PC-9 (cell line): ENCODE measurements at regions of chr7 and their contacts with region 1.

Region 1: DNA sequence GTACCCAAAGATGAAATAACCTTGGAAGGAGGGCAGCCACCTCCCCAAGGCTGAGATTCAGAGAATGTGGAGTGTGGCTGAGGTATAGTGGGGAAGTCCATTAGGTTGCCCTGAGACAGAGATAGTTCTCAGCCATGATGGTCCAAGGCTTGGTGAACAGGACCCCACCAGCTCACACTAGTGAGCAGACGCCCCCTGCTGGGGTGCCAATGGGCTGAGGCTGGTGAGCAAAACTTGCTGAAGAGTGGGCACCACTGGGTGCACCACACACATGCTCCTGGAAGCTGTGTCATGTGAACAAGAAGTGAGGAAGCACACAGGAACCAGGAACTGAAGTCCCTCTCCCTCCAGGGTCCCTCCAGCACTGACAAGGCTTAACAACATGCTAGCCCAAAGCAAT is 8.9 kb downstream of the FBXL13 start:
- DNase-seq: peak in 1 of 2 experiments; percentile 23
- H3K4me3 ChIP-seq: no peak overlapping the region
- H3K27ac ChIP-seq: no peak overlapping the region
- H3K4me1 ChIP-seq: no peaks in the 10 kb centered on the region
- H3K27me3 ChIP-seq: no peaks in the 10 kb centered on the region
- CTCF ChIP-seq: peak; percentile 53

Region 2: DNA sequence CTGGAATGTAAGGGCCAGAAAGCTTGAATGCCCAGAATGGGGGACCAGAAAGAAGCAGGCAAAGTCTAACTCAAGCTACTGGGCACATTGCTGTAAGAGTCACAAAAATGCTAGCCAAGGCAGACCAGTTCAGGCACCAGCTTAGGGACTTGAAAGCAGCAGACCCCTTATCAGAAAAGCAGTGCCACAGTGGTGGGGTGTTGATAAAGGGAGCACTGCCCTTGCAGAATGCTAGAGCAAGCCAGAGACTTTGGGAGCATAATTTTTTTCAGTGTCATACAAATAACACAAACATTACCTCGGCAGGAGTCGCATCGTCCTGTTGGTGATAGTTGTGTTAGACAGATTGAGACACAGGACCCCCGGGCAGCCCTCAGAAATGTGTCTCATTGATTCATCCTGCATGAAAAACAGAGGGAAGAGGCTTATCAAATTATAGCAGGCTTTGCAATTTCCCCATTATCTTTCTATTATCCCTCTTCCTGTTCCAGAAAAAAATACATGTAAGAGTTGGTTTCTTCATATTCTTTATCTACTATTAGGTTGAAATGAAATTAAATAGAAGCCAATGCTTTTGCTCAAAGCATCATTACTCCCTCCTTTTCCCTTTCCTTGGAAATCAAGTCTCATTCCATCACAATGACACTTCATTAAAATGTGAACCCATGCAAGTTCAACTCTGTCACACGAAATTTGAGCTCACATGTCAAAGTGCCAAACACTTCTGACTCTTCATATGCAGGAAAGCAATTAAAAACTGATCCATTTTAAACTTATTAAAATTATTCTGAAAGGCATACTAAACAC is 139.5 kb before region 1 on chr7:
- CTCF ChIA-PET with region 1: interaction called, 16 read pairs
- POLR2A ChIA-PET with region 1: no interaction called
- intact Hi-C with region 1: no loop called
- DNase-seq: no peak
- H3K4me3 ChIP-seq: no peak overlapping the region
- H3K27ac ChIP-seq: no peak overlapping the region
- H3K4me1 ChIP-seq: no peaks in the 10 kb centered on the region
- H3K27me3 ChIP-seq: no peaks in the 10 kb centered on the region
- CTCF ChIP-seq: no peak

Region 3: DNA sequence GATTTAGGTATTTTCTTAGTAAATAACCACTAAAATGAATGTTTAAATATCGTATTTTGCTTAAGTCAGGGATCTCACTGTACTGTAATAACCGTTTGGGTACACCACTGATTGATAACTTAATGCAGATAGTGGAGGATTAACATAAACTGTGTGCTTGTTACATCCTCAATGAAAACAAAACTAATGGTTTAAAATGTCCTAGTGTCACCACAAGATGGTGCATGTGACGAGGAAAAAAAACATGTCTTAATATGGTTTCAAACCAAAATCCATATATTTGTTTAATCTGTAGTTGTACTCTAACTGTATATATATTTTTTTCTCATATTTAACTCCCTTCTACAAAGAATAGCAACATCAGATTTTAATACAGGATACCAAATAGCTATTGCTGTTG is 28.4 kb after region 1 on chr7:
- CTCF ChIA-PET with region 1: interaction called, 11 read pairs
- POLR2A ChIA-PET with region 1: interaction called, 16 read pairs
- intact Hi-C with region 1: no loop called
- DNase-seq: no peak
- H3K4me3 ChIP-seq: no peak overlapping the region
- H3K27ac ChIP-seq: no peak overlapping the region
- H3K4me1 ChIP-seq: no peaks in the 10 kb centered on the region
- H3K27me3 ChIP-seq: no peaks in the 10 kb centered on the region
- CTCF ChIP-seq: no peak

Region 4: GRCh38 chr7:103148994-103149807 is 83.5 kb after region 1 on chr7 and contains the start of gene NAPEPLD:
- CTCF ChIA-PET with region 1: interaction called, 11 read pairs
- POLR2A ChIA-PET with region 1: no interaction called
- intact Hi-C with region 1: no loop called
- DNase-seq: peak; percentile 55 to 86
- H3K4me3 ChIP-seq: peak within 1 kb of the TSS; percentile 77
- H3K27ac ChIP-seq: peak within 1 kb of the TSS; percentile 82
- H3K4me1 ChIP-seq: peaks cover 35% of the 10 kb centered on the region
- H3K27me3 ChIP-seq: no peaks in the 10 kb centered on the region
- CTCF ChIP-seq: no peak
- total RNA-seq, gene NAPEPLD: 22.6 TPM in 2 replicates

Region 5: DNA sequence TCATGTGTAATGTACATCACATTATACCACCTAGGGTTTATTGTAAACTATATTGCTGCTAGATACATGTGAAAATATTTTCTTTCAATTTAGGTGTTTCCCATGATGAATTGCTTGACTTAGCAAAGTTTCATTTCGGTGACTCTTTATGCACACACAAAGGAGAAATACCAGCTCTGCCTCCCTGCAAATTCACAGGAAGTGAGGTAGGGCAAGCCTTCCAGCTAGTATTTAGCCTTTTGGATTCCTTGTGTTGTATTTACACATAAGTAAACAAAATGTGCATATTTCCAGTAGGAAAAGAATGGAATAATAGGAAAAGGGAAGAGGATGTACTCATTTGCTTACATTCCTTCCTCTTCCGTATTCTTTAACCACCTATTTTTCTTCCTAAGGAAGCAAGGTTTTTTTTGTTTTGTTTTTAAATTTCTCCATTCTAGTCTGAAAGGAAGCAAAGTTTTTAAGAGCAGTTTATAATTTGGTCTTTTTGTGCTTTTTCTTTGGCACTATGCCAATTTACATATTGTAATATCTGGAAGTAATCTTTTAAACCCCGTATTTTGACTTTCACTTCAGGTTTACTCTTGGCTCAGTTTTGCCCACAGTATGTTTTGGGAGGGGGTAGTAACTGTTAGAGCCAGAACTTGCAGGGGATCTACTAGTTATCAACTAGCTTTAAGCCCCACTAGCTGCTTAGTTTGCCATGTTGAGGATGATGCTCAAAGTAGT is 242.0 kb after region 1 on chr7:
- CTCF ChIA-PET with region 1: interaction called, 17 read pairs
- POLR2A ChIA-PET with region 1: no interaction called
- intact Hi-C with region 1: no loop called
- DNase-seq: no peak
- H3K4me3 ChIP-seq: no peak overlapping the region
- H3K27ac ChIP-seq: no peak overlapping the region; the same call in 1 of the 2 replicates
- H3K4me1 ChIP-seq: no peaks in the 10 kb centered on the region
- H3K27me3 ChIP-seq: no peaks in the 10 kb centered on the region
- CTCF ChIP-seq: no peak